K562 (cell line): ENCODE measurements at regions of chr17 and their contacts with region 1.

Region 1: DNA sequence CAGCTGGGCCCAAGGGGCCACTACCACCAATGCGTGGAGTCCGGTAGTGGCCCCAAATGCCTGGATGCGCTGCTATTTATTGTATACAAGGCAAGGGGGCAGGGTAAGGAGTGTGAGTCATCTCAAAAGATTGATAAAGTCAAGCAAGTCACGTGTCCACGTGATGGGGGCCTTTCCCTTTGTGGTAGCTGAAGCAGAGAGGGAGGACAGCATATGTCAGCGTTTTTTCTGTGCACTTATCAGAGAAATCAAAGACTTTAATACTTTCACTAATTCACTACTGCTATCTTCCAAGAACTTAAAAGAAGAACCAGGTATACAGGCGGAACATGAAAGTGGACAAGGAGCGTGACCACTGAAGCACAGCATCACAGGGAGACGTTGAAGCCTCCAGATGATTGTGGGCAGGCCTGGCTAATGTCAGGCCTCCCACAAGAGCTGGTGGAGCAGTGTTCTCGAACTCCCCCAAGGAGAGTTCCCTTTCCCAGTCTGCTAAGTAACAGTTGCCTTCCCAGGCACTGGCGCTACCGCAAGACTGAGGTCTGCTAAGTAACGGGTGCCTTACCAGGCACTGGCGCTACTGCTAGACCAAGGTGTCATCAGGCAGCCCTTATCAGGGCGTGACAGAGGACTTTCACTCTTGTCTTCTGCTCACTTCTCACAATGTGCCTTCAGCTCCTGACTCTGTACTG is 10.8 kb upstream of the ASB16 start:
- DNase-seq: peak; percentile 45 to 90 (median 52)
- ATAC-seq: peak; percentile 96
- H3K4me3 ChIP-seq: no peak overlapping the region
- H3K27ac ChIP-seq: peak overlapping the region; percentile 79
- H3K4me1 ChIP-seq: peaks cover 20 to 24% of the 10 kb centered on the region in 2 experiments
- H3K27me3 ChIP-seq: no peaks in the 10 kb centered on the region
- CTCF ChIP-seq: no peak
- EP300 ChIP-seq: peak; percentile 35; the same call in 1 of the 2 replicates
- POLR2A ChIP-seq: no peak
- RAD21 ChIP-seq: no peak

Region 2: DNA sequence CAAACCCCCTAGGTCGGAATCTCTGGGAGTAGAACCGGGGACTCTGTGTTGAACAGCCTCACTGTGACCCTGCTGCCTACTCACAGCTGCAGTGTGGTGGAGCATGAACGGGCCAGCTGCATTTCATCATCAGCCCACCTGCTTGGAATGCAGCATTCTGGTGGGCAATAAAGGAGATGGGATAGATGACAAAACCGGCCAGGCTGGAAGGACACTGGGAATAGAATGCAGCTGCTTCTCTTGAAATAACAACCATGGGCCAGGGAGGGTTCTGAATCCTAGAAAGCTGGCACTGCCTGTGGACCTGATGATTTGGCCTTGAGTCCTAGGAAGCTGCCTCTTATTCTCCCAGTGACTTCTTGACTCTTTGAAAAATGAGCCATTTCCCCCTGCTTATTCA is 355.9 kb before region 1 on chr17:
- CTCF ChIA-PET with region 1: no interaction called
- POLR2A ChIA-PET with region 1: no interaction called
- in situ Hi-C with region 1: no loop called
- intact Hi-C with region 1: no loop called
- DNase-seq: no peak
- ATAC-seq: no peak
- H3K4me3 ChIP-seq: no peak overlapping the region
- H3K27ac ChIP-seq: no peak overlapping the region
- H3K4me1 ChIP-seq: no peaks in the 10 kb centered on the region
- H3K27me3 ChIP-seq: peaks cover 0 to 5% of the 10 kb centered on the region in 2 experiments; a peak in 1 of 5 replicates
- CTCF ChIP-seq: no peak
- EP300 ChIP-seq: no peak
- POLR2A ChIP-seq: no peak
- RAD21 ChIP-seq: no peak

Region 3: DNA sequence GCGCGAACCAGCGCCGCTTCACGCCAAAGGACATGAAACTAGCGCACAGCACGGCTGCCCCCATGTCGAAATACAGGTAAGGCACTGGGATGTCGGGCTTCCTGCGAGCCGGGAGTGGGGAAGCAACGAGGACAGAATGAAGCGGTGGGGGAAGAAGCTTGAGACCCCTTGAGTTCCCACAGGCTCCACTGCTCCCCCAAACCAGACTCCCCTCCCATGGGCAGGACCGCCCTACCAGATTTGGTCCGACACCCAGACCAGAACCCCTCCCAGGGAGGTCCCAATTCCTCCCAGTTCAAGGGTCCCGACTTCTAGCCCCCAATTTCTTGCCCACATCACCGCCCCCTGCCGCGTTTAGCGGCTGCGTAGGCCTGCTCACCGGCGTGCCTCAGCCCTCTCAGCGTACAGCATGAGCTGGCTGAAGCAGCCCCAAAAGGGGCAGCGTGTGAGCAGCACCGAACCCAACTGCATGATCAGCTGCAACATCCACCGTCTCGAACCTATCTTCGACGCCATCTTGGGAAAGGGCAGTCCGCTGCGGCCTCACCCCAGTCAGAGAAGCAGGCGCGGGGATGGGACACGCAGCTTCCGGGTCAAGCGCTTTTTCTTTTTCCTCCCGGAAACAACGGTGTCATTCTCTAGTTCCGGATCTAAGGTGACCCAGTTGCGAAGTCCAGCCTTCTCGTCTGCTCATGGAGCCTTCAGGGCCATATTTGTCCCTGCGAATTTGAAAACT is 145.1 kb before region 1 on chr17 and contains the start of gene TMEM101:
- CTCF ChIA-PET with region 1: no interaction called
- POLR2A ChIA-PET with region 1: no interaction called
- in situ Hi-C with region 1: no loop called
- intact Hi-C with region 1: loop called (anchors 10 kb)
- DNase-seq: peak; percentile 93 to 96 (median 94)
- ATAC-seq: peak; percentile 96
- H3K4me3 ChIP-seq: peak within 1 kb of the TSS; percentile 72
- H3K27ac ChIP-seq: peak within 1 kb of the TSS; percentile 78
- H3K4me1 ChIP-seq: peaks cover 9 to 20% of the 10 kb centered on the region in 2 experiments; a peak in 4 of 5 replicates
- H3K27me3 ChIP-seq: no peaks in the 10 kb centered on the region
- CTCF ChIP-seq: 0 out of 6 replicates have a peak, but pooled peaks of 1 of the 3 experiments have one; percentile 10
- EP300 ChIP-seq: peak; percentile 63
- POLR2A ChIP-seq: peak; percentile 87
- RAD21 ChIP-seq: no peak; a peak in 1 of 4 replicates
- polyA plus RNA-seq, gene TMEM101: 79.4 to 110 TPM

Region 4: DNA sequence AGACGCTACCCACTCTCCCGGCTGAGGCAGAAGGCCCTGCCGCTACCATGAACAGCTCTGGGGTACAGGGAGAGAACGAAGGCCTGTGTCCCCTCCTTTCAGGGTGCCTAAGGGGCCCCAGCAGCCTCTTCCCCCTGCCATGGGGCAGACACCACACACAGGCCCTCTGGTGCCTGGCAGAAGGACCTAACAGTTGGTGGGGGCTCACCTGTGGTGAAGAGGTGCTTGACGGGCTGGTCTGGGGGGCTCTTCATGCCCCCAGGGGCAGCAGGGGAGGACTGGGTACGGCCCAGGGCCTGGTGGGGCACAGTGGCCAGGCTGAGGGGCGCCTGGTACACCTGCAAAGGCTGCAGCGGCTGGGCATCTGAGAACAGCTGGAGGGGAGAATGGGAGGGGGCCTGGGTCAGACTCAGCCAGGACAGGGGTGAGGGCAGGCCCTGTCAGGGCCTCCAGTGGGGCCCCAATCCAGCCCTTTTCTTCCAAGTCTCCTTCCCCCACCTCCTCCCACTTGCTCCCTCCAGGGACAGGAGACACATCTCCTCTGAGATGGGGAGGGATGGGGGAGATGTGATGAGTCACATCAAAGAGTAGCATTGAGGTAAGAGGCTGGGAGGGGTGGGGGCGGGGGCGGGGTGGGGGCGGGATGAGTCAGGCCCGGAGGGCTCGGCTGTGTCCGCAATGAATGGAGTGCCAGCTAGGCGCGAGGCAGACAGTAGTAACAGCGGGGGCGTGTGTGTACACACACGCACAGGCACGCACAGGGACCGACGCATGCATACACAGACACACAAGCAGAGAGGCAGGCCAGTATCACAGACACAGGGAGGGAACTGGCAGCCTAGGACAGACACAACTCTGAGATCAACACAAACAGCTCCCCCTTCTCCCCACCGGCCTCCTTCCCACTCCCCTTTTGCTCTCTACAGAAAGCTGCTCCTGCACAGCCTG is 73.0 kb before region 1 on chr17:
- CTCF ChIA-PET with region 1: no interaction called
- POLR2A ChIA-PET with region 1: no interaction called
- in situ Hi-C with region 1: no loop called
- intact Hi-C with region 1: no loop called
- DNase-seq: peak; percentile 92 to 96 (median 96)
- ATAC-seq: peak; percentile 89
- H3K4me3 ChIP-seq: no peak overlapping the region; the same call in 1 of the 2 replicates
- H3K27ac ChIP-seq: peak overlapping the region; percentile 91
- H3K4me1 ChIP-seq: peaks cover 21 to 56% of the 10 kb centered on the region in 2 experiments
- H3K27me3 ChIP-seq: no peaks in the 10 kb centered on the region
- CTCF ChIP-seq: no peak
- EP300 ChIP-seq: no peak
- POLR2A ChIP-seq: 0 out of 2 replicates have a peak, but pooled peaks have one; percentile 43
- RAD21 ChIP-seq: no peak

Region 5: DNA sequence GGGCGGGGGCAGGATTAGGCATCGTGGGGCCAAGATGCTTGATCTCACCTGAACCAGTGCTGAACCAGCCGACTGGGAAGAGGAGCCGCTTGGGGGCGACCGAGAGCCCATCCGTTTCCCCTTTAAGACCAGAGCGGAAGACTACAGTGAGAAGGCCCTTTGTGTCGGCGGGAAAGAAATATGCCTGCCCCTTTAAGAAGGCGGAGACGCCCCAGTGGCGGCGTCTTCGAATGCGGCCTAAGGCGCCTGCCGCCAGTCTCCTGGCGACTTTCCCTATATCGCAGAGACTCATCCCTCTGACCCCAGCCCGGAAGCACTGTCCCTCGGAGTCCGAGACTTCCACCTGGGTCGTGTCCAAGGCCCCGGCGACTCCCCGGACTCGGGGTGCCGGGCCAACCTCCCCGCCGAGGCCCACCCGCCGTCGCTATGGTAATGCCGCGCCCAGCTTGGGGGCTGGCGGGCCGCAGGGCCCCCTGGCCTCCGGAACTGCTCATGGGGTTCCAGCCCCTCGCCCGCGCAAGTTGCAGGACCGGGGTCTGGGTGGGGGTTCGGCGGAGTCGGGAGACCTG is 17.9 kb before region 1 on chr17 and contains the start of gene HROB:
- CTCF ChIA-PET with region 1: no interaction called
- POLR2A ChIA-PET with region 1: interaction called, 20 read pairs
- in situ Hi-C with region 1: no loop called
- intact Hi-C with region 1: no loop called
- DNase-seq: peak; percentile 82 to 99 (median 86)
- ATAC-seq: peak; percentile 85
- H3K4me3 ChIP-seq: peak within 1 kb of the TSS; percentile 94
- H3K27ac ChIP-seq: peak within 1 kb of the TSS; percentile 95
- H3K4me1 ChIP-seq: peaks cover 31 to 39% of the 10 kb centered on the region in 2 experiments
- H3K27me3 ChIP-seq: no peaks in the 10 kb centered on the region
- CTCF ChIP-seq: peak; percentile 90 to 97 (median 96)
- EP300 ChIP-seq: no peak
- POLR2A ChIP-seq: peak; percentile 83
- RAD21 ChIP-seq: peak; percentile 47 to 60
- polyA plus RNA-seq, gene HROB: 6.6 to 6.7 TPM